ENCODE measurements at regions of chrX and their contacts with region 1.

Region 1: DNA sequence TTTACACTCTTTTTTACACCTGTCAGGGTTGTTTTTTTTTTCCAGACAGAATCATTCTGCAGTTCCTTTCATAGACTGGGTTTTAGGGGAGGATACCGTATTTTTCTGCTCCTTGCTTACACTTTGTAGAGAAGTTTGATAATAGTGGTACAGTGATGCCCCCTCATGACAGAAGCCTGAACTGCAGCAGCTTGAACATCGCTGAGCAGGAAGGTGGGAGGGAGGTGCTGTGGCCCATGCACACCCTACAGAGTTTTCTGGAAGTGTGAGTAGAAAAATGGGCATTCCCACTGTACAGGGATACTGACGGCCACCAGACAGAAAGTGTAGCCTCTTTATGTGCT is 54.5 kb downstream of the RAB40A start:
- DNase-seq: peak; percentile 36 to 85
- H3K4me3 ChIP-seq: no peak overlapping the region
- H3K27ac ChIP-seq: no peak overlapping the region
- H3K4me1 ChIP-seq: peaks cover 0 to 4% (median 0%) of the 10 kb centered on the region in 4 experiments; a peak in 2 of 7 replicates
- H3K27me3 ChIP-seq: no peaks in the 10 kb centered on the region
- CTCF ChIP-seq: peak; percentile 68 to 79 (median 70)
- EP300 ChIP-seq: no peak
- POLR2A ChIP-seq: no peak
- RAD21 ChIP-seq: peak; percentile 79 to 83

Region 2: GRCh38 chrX:103343105-103343504 is 121.6 kb before region 1 on chrX:
- CTCF ChIA-PET with region 1: interaction called, 26 read pairs
- POLR2A ChIA-PET with region 1: no interaction called
- DNase-seq: no peak
- H3K4me3 ChIP-seq: no peak overlapping the region
- H3K27ac ChIP-seq: no peak overlapping the region
- H3K4me1 ChIP-seq: no peaks in the 10 kb centered on the region; a peak in 3 of 7 replicates
- H3K27me3 ChIP-seq: no peaks in the 10 kb centered on the region
- CTCF ChIP-seq: peak in 2 of 3 experiments; percentile 29 to 52; a peak in 2 of 4 replicates
- EP300 ChIP-seq: no peak
- POLR2A ChIP-seq: no peak
- RAD21 ChIP-seq: peak; percentile 46 to 50

Measured in H1 (cell line).